Activated T-helper 1 cell treated with anti-CD3 and anti-CD28 coated beads, Interleukin-12 subunit alpha, Interleukin-12 subunit beta, Interleukin-2, Interleukin-4 antibody, amounts not matched to agents 30 ng/mL and 10 ng/mL and 1 ng/mL, durations not matched to agents 14 hours and 24 hours and 36 hours (primary cell): ENCODE measurements at regions of chr7 and their contacts with region 1.

Region 1: GRCh38 chr7:92641921-92642511 is 51.8 kb upstream of the FAM133B start:
- DNase-seq: peak; percentile 64
- H3K4me3 Mint-ChIP-seq: peak overlapping the region; percentile 58
- H3K27ac Mint-ChIP-seq: peak overlapping the region; percentile 97
- H3K4me1 Mint-ChIP-seq: peaks cover 87% of the 10 kb centered on the region
- H3K27me3 Mint-ChIP-seq: no peaks in the 10 kb centered on the region

Region 2: GRCh38 chr7:92953657-92954056 is 311.6 kb after region 1 on chr7:
- intact Hi-C with region 1: loop called (anchors 5 kb)
- DNase-seq: no peak
- H3K4me3 Mint-ChIP-seq: no peak overlapping the region
- H3K27ac Mint-ChIP-seq: peak overlapping the region; percentile 40
- H3K4me1 Mint-ChIP-seq: peaks cover 34% of the 10 kb centered on the region
- H3K27me3 Mint-ChIP-seq: peaks cover 1% of the 10 kb centered on the region

Region 3: DNA sequence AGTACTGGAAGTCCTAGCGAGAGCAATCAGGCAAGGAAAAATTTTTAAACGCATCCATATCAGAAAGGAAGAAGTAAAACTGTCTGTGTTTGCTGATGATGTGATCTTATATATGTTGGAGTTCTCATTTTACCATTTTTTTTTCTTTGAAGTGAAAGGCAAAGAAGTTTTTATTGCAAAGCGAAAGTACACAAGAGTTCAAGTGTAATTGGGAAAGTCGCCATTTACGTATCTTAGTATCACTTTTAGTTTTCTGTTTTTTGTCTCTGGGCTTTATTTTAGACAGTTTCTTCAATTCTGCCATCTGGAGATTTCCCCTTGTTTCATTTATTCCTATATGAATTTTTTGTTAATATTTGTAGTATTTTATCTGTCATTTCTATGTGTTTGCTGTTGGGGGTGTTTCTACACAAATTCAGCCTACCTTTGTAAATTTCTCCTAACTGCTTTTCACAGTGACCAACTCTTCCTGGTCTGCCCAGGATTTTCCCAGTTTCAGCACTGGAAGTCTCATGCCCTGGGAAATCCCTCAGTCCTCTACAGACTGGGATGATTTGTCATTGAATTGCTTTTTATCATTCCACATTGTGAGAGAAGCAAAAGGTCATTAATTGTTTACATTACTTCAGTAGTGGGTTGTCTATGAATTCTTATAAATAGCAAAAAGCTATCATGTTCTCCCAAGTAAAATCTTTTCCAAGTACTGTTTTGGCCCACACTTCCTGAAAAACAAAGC is 1338.9 kb after region 1 on chr7:
- intact Hi-C with region 1: no loop called
- DNase-seq: no peak
- H3K4me3 Mint-ChIP-seq: no peak overlapping the region
- H3K27ac Mint-ChIP-seq: no peak overlapping the region
- H3K4me1 Mint-ChIP-seq: peaks cover 7% of the 10 kb centered on the region
- H3K27me3 Mint-ChIP-seq: peaks cover 2% of the 10 kb centered on the region